Right ventricle myocardium inferior (tissue), 1 donor: ENCODE measurements at regions of chr1 and their contacts with region 1.

Region 1: DNA sequence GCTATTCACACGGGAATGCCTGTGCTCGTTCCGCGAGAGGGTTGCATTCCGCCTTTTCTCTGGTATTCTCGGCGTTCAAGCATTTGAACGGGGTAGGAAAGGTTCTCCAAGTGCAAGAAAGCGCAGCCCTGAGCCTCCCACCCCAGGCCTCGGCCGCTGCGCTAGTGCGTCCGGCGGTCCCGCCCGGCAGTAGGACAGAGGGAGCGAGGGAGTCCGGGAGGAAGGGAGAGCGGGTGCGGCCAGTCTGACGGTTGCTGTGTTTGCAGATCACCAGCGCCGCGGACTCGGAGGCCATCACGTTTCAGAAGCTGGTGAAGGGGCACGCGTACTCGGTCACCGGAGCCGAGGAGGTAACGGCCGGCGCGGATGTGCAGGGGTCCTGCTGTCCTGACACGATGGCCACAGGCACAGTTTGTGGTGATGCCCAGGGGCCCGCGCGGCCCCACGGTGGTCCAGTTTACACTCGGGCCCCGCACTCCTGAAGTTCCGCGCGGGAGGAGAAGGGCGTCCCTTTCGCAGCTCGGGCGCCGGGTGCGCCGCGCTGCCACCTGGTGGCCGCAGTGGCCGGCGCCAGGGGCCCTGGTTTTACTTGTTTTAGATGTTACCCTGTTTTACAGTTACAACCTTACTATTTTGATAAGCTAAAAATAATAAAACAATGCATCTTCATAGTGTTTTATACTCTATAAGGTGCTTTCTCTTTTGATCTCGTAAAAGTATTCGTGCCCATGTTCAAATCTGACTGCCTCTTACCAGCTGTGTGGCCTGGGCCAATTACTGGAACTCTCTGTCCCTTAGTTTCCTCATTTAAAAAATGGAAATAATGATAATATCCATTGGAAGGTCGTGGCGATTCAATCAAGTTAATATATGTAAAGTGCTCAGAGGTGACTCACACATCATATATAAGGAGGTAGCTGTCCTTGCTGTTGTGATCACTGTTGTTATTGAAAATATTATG is 36.7 kb downstream of the CAPN2 start:
- DNase-seq: peak; percentile 90
- ATAC-seq: peak; percentile 84

Region 2: GRCh38 chr1:223700942-223701637 is 48.0 kb before region 1 on chr1:
- intact Hi-C with region 1: loop called (anchors 1 kb)
- DNase-seq: no peak
- ATAC-seq: no peak

Region 3: DNA sequence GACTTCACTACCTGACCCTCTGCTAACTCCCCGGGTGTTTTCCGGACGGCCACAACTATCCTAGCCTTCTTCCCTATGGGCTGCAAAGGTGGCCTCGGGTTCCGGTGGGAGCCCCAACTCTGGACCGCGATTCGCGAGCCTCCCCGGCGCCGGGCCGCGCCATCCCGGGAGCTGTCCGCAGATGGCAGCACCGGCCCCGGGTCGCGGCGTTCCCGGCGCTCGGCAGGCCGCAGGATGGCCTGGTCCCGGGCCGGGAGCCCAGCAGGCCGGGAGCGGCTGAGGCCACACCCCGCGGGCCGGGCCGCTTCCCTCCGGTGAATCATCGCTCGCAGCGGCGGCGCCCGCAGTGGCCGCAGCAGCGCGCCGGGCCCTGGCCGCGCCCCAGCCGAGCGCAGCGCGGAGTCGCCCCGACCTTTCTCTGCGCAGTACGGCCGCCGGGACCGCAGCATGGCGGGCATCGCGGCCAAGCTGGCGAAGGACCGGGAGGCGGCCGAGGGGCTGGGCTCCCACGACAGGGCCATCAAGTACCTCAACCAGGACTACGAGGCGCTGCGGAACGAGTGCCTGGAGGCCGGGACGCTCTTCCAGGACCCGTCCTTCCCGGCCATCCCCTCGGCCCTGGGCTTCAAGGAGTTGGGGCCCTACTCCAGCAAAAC is 36.7 kb before region 1 on chr1 and contains the start of gene CAPN2:
- intact Hi-C with region 1: loop called (anchors 1 kb)
- DNase-seq: peak; percentile 92
- ATAC-seq: peak; percentile 95
- total RNA-seq, gene CAPN2: 85.4 TPM

Region 4: DNA sequence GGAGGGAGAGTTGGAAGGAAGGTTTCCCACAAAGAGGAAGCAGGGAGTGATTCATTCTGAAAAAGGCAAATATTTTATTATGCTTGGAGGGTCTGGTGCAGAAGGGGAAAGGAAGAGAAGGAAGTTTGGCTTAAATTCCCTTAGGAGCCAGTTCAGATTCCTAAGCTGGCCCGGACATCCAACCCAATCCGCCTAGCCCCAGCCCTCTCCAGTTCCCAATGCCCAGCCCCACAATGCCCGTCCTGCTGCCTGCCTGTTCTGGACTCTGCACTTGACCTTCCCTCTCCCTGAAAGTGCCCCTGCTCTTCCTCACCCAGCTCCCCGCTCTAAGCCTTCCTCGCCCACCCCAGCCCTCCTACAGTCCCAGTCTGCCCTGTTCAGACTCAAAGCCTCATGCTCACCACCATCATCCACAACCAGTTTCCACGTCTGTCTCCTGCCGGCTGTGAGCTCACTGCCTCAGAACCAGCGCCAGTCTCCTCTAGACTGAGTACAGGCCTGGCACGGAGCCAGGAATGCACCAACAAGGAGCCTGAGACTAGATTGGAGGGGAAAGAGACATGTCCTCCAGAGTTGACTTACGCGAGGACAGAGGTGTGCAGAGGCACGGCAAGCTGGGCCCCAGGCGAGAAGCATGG is 17.8 kb before region 1 on chr1:
- intact Hi-C with region 1: loop called (anchors 2 kb)
- DNase-seq: peak; percentile 89
- ATAC-seq: peak; percentile 53